Esophagus muscularis mucosa (tissue), 4 donors: ENCODE measurements at regions of chr1 and their contacts with region 1.

Region 1: DNA sequence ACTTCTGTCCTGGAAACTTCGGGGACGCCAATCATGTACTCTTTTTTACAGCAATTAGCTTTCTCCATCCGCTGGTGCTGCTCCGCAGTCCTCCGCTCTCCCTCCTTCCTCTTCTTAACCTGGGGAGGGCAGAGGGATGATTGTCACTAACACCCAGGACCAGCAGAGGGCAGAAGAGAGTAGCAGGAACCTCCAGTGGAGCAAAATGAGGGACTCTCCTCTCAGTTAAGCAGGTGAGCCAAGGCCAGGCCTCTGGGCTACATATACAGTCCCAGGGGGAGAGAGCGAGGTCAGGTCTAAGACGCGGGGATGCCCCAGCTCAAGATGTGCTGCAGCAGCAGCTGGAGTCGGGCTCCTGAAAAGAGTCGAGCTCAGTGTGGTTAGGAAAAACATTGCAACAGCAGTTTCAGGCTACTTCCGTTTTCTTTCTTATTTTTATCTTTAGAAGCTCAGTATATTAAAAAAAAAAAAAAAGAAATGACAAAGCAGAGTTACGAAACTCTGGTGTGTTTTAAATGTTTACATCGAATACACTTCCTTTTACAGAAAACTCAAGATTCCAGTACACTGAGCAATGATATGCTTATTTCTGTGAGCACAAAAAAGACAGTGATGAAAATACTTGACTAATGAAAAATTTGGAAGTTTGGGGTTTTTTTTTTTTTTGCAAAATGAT is 25.7 kb upstream of the NLRP3 start:
- DNase-seq: peak; percentile 95
- H3K4me3 ChIP-seq: peak overlapping the region; percentile 9 to 45 (median 10)
- H3K27ac ChIP-seq: no peak overlapping the region
- H3K4me1 ChIP-seq: peaks cover 0 to 7% (median 3%) of the 10 kb centered on the region in 4 donors
- H3K27me3 ChIP-seq: peaks cover 0 to 11% (median 0%) of the 10 kb centered on the region in 4 donors
- CTCF ChIP-seq: peak; percentile 69 to 92 (median 73)
- EP300 ChIP-seq: no peak
- POLR2A ChIP-seq: no peak

Region 2: GRCh38 chr1:247487057-247487456 is 96.8 kb after region 1 on chr1:
- intact Hi-C with region 1: loop called (anchors 5 kb)
- DNase-seq: no peak
- H3K4me3 ChIP-seq: no peak overlapping the region
- H3K27ac ChIP-seq: no peak overlapping the region
- H3K4me1 ChIP-seq: no peaks in the 10 kb centered on the region
- H3K27me3 ChIP-seq: peaks cover 0 to 7% (median 0%) of the 10 kb centered on the region in 4 donors
- CTCF ChIP-seq: peak; percentile 31 to 43 (median 37)
- EP300 ChIP-seq: no peak
- POLR2A ChIP-seq: no peak